Common myeloid progenitor, CD34-positive (primary cell): ENCODE measurements at regions of chr7 and their contacts with region 1.

Region 1: DNA sequence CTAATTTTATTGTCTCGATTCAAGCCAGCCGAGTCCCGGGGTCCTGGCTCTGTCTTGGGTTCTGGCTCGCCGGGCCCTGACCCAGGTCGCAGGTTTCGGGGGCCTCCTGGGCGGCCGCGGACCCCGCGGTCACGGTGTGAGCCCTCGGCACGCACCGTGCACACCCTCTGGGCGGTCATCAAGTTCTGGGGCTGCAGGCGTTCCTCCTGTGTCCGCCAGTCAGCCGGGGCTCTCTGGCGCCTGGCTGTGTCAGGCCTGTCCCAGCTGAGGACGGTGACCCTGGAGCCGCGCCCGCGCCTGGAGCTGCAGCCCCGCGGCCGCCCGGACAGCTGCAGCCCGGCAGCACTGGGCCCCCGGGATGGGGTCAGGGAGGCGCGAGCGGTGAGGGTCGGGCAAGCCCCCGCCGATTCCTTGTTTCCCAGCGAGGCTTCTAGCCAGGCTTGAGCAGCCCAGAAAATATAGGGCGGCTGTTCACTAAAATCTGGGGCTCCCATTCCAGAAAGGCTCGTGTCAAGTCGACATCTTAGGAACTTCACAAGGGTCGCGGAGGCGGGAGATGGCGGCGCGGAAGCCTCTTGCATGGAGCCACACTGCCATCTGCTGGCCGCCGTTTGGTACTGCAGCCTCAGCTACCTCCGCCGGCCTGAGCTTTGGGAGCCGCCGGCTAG is 4.2 kb upstream of the HOXA7 start:
- DNase-seq: peak; percentile 92 to 96 (median 95)
- H3K4me3 ChIP-seq: peak overlapping the region; percentile 56 to 100 (median 88)
- H3K27ac ChIP-seq: peak overlapping the region; percentile 86 to 96
- H3K4me1 ChIP-seq: peaks cover 14 to 68% (median 64%) of the 10 kb centered on the region in 4 experiments
- H3K27me3 ChIP-seq: no peaks in the 10 kb centered on the region

Region 2: GRCh38 chr7:26376175-26376917 is 784.3 kb before region 1 on chr7:
- CTCF ChIA-PET with region 1: interaction called, 41 read pairs
- POLR2A ChIA-PET with region 1: interaction called, 4 read pairs
- DNase-seq: peak; percentile 75 to 89 (median 87)
- H3K4me3 ChIP-seq: peak overlapping the region; percentile 83 to 90 (median 85)
- H3K27ac ChIP-seq: peak overlapping the region; percentile 77 to 87
- H3K4me1 ChIP-seq: peaks cover 20 to 55% (median 33%) of the 10 kb centered on the region in 4 experiments
- H3K27me3 ChIP-seq: no peaks in the 10 kb centered on the region

Region 3: GRCh38 chr7:26515314-26515842 is 645.3 kb before region 1 on chr7:
- CTCF ChIA-PET with region 1: no interaction called
- POLR2A ChIA-PET with region 1: no interaction called
- DNase-seq: no peak
- H3K4me3 ChIP-seq: no peak overlapping the region
- H3K27ac ChIP-seq: no peak overlapping the region
- H3K4me1 ChIP-seq: peaks cover 0 to 15% (median 4%) of the 10 kb centered on the region in 4 experiments
- H3K27me3 ChIP-seq: no peaks in the 10 kb centered on the region

Region 4: GRCh38 chr7:26667500-26668133 is 493.1 kb before region 1 on chr7:
- CTCF ChIA-PET with region 1: interaction called, 12 read pairs
- POLR2A ChIA-PET with region 1: no interaction called
- DNase-seq: peak; percentile 98
- H3K4me3 ChIP-seq: peak overlapping the region in 4 of 7 experiments; percentile 2 to 67 (median 12)
- H3K27ac ChIP-seq: peak overlapping the region; percentile 77 to 83
- H3K4me1 ChIP-seq: peaks cover 11 to 64% (median 42%) of the 10 kb centered on the region in 4 experiments
- H3K27me3 ChIP-seq: no peaks in the 10 kb centered on the region

Region 5: GRCh38 chr7:26686448-26686981 is 474.2 kb before region 1 on chr7:
- CTCF ChIA-PET with region 1: interaction called, 36 read pairs
- POLR2A ChIA-PET with region 1: no interaction called
- DNase-seq: peak in 2 of 3 donors; percentile 69 to 79
- H3K4me3 ChIP-seq: no peak overlapping the region
- H3K27ac ChIP-seq: no peak overlapping the region
- H3K4me1 ChIP-seq: peaks cover 37 to 93% (median 60%) of the 10 kb centered on the region in 4 experiments
- H3K27me3 ChIP-seq: no peaks in the 10 kb centered on the region

Region 6: GRCh38 chr7:26787701-26788100 is 373.0 kb before region 1 on chr7:
- CTCF ChIA-PET with region 1: no interaction called
- POLR2A ChIA-PET with region 1: no interaction called
- DNase-seq: no peak
- H3K4me3 ChIP-seq: no peak overlapping the region
- H3K27ac ChIP-seq: no peak overlapping the region
- H3K4me1 ChIP-seq: no peaks in the 10 kb centered on the region
- H3K27me3 ChIP-seq: no peaks in the 10 kb centered on the region

Region 7: GRCh38 chr7:26853788-26854393 is 306.8 kb before region 1 on chr7:
- CTCF ChIA-PET with region 1: interaction called, 16 read pairs
- POLR2A ChIA-PET with region 1: interaction called, 4 read pairs
- DNase-seq: peak; percentile 73 to 86 (median 83)
- H3K4me3 ChIP-seq: no peak overlapping the region
- H3K27ac ChIP-seq: no peak overlapping the region
- H3K4me1 ChIP-seq: peaks cover 5 to 39% (median 27%) of the 10 kb centered on the region in 4 experiments
- H3K27me3 ChIP-seq: no peaks in the 10 kb centered on the region

Region 8: DNA sequence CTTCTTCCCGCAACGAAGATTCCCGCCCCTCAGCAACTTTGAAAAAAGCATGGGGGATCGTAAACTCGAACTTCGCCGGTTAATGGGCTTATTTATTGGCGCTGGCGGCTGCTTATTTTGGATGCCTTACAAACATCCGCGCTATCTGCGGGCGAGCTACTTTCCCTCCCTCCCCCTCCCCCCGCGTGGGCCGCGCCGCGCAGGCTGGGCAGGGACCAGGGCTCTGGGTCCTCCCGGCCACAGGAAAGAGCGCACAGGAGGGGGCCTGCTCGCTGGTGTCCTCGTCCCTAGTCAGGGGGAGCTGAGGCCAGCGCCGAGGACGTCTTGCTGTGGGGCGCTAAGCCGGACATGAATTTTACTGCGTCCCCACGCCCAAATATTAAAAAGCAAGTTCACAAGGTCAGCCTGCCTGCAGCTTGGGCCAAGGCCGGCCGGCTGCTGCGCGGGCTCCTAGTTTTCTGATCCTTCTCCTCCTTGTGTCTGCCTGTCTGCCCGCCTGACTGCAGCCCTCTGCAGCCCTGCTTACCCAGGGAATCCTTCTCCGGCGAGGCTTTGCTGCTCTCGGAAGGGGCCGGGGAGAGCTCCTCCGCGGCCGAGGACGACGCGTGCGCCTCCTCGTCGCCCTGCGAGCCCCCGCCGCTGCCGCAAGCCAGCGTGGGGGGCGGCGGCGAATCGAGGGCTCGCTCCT is 12.3 kb after region 1 on chr7:
- CTCF ChIA-PET with region 1: interaction called, 84 read pairs
- POLR2A ChIA-PET with region 1: interaction called, 17 read pairs
- DNase-seq: no peak
- H3K4me3 ChIP-seq: peak overlapping the region; percentile 78 to 100 (median 85)
- H3K27ac ChIP-seq: peak overlapping the region; percentile 92 to 96
- H3K4me1 ChIP-seq: peaks cover 4 to 48% (median 27%) of the 10 kb centered on the region in 4 experiments
- H3K27me3 ChIP-seq: peaks cover 0 to 7% (median 0%) of the 10 kb centered on the region in 5 experiments

Region 9: GRCh38 chr7:27179503-27180430 is 19.1 kb after region 1 on chr7:
- CTCF ChIA-PET with region 1: interaction called, 84 read pairs
- POLR2A ChIA-PET with region 1: interaction called, 5 read pairs
- DNase-seq: peak; percentile 75 to 85 (median 81)
- H3K4me3 ChIP-seq: peak overlapping the region in 6 of 7 experiments; percentile 4 to 72 (median 44)
- H3K27ac ChIP-seq: no peak overlapping the region
- H3K4me1 ChIP-seq: peaks cover 0 to 31% (median 26%) of the 10 kb centered on the region in 4 experiments
- H3K27me3 ChIP-seq: peaks cover 0 to 62% (median 25%) of the 10 kb centered on the region in 5 experiments

Region 10: DNA sequence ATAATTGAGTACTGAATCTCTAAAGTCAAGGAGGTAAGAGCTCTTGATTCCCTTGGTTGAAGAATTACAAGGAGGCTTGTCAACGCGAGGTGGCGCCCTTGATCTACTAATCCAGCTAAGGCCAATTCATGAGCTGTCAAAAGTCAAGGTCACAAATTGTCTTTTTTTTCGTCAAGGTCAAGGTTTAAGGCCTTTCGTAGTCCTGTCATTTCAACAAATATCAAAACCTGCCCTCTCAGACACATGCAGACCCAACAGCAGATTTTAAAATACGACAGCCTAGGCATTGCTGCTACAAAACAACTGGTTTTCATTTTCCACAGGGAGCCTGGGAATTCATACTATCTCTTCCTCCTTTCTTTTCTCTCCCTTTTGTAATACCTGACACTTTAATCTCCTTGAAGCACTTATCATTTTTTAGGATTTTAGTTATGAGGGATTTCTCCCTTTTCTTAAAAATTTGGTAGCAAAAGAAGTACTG is 35.6 kb after region 1 on chr7:
- CTCF ChIA-PET with region 1: no interaction called
- POLR2A ChIA-PET with region 1: no interaction called
- DNase-seq: peak; percentile 83 to 90 (median 89)
- H3K4me3 ChIP-seq: no peak overlapping the region
- H3K27ac ChIP-seq: no peak overlapping the region
- H3K4me1 ChIP-seq: peaks cover 0 to 47% (median 36%) of the 10 kb centered on the region in 4 experiments
- H3K27me3 ChIP-seq: peaks cover 42 to 99% (median 72%) of the 10 kb centered on the region in 5 experiments

Region 11: GRCh38 chr7:27207348-27207985 is 46.8 kb after region 1 on chr7:
- CTCF ChIA-PET with region 1: no interaction called
- POLR2A ChIA-PET with region 1: no interaction called
- DNase-seq: no peak
- H3K4me3 ChIP-seq: no peak overlapping the region
- H3K27ac ChIP-seq: no peak overlapping the region
- H3K4me1 ChIP-seq: peaks cover 0 to 13% (median 12%) of the 10 kb centered on the region in 4 experiments
- H3K27me3 ChIP-seq: peaks cover 27 to 100% (median 83%) of the 10 kb centered on the region in 5 experiments